Endothelial cell of umbilical vein (primary cell): ENCODE measurements at regions of chr12 and their contacts with region 1.

Region 1: GRCh38 chr12:65853489-65854370 is 29.4 kb downstream of the HMGA2 start:
- DNase-seq: peak; percentile 62
- H3K4me3 ChIP-seq: no peak overlapping the region
- H3K27ac ChIP-seq: peak overlapping the region; percentile 70
- H3K4me1 ChIP-seq: peaks cover 52% of the 10 kb centered on the region
- H3K27me3 ChIP-seq: no peaks in the 10 kb centered on the region
- CTCF ChIP-seq: no peak
- POLR2A ChIP-seq: no peak

Region 2: DNA sequence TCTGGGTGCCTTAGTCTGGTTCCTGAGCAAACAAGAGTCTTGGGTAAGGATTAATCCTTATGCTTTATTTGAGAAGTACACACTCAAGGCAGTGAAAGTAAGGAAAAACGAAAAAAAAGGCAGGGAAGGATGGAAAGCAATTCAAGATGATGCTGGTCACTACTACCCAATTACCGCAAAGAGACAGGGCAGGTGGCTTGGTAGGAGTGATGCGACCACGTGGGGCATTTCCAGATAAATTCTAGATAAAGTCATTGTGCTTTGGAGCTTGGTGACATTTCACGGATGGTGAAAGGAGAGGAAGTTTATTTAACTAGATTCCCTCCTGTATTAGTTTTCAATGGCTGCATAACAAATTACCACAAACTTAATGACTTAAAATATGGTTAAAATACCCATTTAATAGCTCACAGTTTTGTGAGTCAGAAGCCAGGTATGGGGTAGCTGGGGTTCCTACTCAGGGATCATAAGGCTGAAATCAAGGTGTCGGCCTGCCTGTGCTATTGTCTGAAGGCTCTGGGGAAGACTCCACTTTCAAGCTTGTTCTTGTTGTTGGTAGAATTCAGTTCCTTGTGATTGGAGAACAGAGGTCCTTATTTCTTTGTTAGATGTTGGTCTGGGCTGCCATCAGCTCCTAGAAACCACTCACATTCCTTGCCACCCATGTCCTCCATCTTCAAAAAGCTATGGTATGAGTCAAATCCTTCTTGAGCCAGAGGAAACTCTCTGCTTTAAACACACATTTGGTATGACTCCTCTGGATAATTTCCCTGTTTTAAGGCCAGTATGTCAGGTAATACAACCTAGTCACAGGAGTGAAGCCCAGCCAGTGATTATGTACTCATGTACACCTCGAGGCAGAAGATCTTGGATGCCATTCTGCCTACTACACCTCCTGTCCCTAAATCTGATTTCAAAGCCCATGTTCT is 35.0 kb before region 1 on chr12:
- CTCF ChIA-PET with region 1: no interaction called
- POLR2A ChIA-PET with region 1: no interaction called
- dilution Hi-C with region 1: no loop called
- intact Hi-C with region 1: no loop called
- DNase-seq: no peak
- H3K4me3 ChIP-seq: no peak overlapping the region
- H3K27ac ChIP-seq: no peak overlapping the region
- H3K4me1 ChIP-seq: peaks cover 13% of the 10 kb centered on the region
- H3K27me3 ChIP-seq: no peaks in the 10 kb centered on the region
- CTCF ChIP-seq: no peak
- POLR2A ChIP-seq: no peak

Region 3: GRCh38 chr12:65840793-65841670 is 12.7 kb before region 1 on chr12:
- CTCF ChIA-PET with region 1: interaction called, 11 read pairs
- POLR2A ChIA-PET with region 1: no interaction called
- dilution Hi-C with region 1: no loop called
- intact Hi-C with region 1: no loop called
- DNase-seq: peak; percentile 96
- H3K4me3 ChIP-seq: peak overlapping the region in 1 of 3 experiments; percentile 19
- H3K27ac ChIP-seq: peak overlapping the region; percentile 73
- H3K4me1 ChIP-seq: peaks cover 27% of the 10 kb centered on the region
- H3K27me3 ChIP-seq: no peaks in the 10 kb centered on the region
- CTCF ChIP-seq: no peak
- POLR2A ChIP-seq: no peak